ENCODE measurements at regions of chr17 and their contacts with region 1.

Region 1: DNA sequence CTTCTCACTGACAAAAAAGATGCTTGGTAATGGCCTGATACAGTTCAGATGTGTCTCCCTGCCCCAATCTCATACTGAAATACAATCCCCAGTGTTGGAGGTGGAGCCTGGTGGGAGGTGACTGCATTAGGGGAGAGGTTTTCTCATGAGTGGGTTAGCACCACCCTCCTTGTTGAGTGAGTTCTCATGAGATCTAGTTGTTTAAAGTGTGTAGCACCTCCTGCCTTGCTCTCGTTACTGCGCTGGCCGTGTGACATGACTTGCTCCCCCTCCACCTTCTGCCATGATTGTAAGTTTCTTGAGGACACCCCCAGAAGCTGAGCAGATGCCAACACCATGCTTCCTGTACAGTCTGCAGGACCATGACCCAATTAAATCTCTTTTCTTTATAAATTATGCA is 5.0 kb downstream of the TSR1 start:
- DNase-seq: no peak
- ATAC-seq: no peak
- H3K4me3 ChIP-seq: no peak overlapping the region
- H3K4me3 Mint-ChIP-seq: no peak overlapping the region
- H3K27ac ChIP-seq: no peak overlapping the region
- H3K27ac Mint-ChIP-seq: no peak overlapping the region
- H3K4me1 ChIP-seq: peaks cover 8 to 13% of the 10 kb centered on the region in 2 experiments
- H3K4me1 Mint-ChIP-seq: peaks cover 16 to 21% (median 21%) of the 10 kb centered on the region in 3 donors
- H3K27me3 ChIP-seq: no peaks in the 10 kb centered on the region
- H3K27me3 Mint-ChIP-seq: no peaks in the 10 kb centered on the region

Region 2: DNA sequence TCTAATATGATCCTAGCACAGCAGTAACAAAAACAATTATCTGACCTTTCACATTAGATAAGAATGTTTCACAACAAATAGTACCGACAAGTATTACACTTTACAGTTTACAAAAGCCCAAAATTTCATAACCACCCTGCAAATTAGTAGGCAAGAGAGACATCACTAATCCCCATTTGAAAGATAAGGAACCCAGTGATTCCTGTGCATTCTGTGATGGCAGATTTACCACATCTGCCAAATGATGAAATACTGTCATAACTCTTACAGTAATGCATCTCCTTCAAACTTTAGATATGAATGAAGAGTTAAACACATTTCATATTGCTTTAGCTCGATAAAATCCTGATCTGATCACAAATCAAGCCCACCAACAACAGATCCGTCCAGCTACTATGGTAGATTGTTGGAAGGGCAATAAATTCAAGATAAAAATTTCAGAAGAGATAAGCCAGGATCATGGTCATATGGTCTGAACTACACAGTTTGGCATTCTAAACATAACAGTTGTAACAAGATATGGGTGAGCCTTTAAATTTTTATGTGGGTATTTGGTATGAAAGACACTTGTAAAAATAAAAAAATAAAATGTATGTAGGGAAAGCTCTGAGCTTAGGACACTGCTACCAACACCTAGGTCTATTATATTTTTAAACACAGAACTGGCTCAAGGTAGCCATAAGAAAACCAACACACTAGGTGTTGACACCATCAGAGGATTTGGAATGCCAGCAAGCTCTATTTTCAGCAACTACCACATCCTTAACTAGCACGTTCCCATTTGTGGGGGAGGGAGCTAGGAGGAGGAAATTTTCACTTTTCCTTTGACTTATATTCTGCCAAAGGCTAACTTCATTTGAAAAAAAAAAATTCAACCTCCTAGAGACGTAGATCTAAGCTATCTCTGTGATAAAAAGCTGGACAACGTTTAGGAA is 940.6 kb before region 1 on chr17:
- CTCF ChIA-PET with region 1: no interaction called
- POLR2A ChIA-PET with region 1: interaction called in 1 of 2 experiments, 14 read pairs
- DNase-seq: no peak
- ATAC-seq: no peak
- H3K4me3 ChIP-seq: no peak overlapping the region
- H3K4me3 Mint-ChIP-seq: peak overlapping the region in 2 of 3 donors; percentile 2 to 41
- H3K27ac ChIP-seq: no peak overlapping the region
- H3K27ac Mint-ChIP-seq: peak overlapping the region; percentile 46 to 73
- H3K4me1 ChIP-seq: peaks cover 38 to 74% of the 10 kb centered on the region in 2 experiments
- H3K4me1 Mint-ChIP-seq: peaks cover 84 to 88% (median 88%) of the 10 kb centered on the region in 3 donors
- H3K27me3 ChIP-seq: no peaks in the 10 kb centered on the region
- H3K27me3 Mint-ChIP-seq: no peaks in the 10 kb centered on the region

Region 3: DNA sequence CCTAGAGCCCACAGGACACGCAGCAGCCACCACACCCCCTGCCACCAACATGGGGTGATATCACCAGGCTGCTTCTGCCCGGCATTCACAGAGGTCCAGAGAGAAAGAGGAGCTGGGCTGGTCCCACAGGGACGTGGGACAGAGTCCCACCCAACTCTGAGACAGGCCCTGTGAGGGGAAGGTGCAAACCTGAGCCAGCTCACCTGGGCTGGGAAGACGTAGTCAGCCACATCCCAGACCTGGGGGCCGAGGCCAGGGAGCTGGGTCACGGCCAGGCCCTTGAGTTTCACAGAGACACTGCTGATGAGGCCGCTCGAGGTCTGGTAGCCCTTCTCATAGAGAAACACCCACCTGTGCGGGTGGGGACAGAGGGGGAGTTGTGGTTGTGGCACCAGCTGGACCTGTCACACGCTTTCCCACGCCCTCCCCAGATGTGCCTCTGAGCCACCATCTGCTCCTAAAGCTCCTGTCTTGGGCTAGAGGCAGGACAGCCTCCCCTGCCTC is 1573.8 kb after region 1 on chr17:
- CTCF ChIA-PET with region 1: no interaction called
- POLR2A ChIA-PET with region 1: no interaction called
- DNase-seq: no peak
- ATAC-seq: no peak
- H3K4me3 ChIP-seq: no peak overlapping the region
- H3K4me3 Mint-ChIP-seq: no peak overlapping the region
- H3K27ac ChIP-seq: no peak overlapping the region
- H3K27ac Mint-ChIP-seq: no peak overlapping the region
- H3K4me1 ChIP-seq: no peaks in the 10 kb centered on the region
- H3K4me1 Mint-ChIP-seq: no peaks in the 10 kb centered on the region
- H3K27me3 ChIP-seq: peaks cover 0 to 14% of the 10 kb centered on the region in 2 experiments
- H3K27me3 Mint-ChIP-seq: no peaks in the 10 kb centered on the region

Measured in T-cell (primary cell).